MCF 10A (cell line): ENCODE measurements at regions of chr13 and their contacts with region 1.

Region 1: GRCh38 chr13:24802074-24802473 is 38.1 kb downstream of the RNF17 start:
- DNase-seq: peak; percentile 81
- H3K4me3 Mint-ChIP-seq: no peak overlapping the region
- H3K27ac Mint-ChIP-seq: peak overlapping the region; percentile 8
- H3K4me1 Mint-ChIP-seq: peaks cover 6% of the 10 kb centered on the region
- H3K27me3 Mint-ChIP-seq: no peaks in the 10 kb centered on the region
- CTCF ChIP-seq: no peak

Region 2: GRCh38 chr13:24788538-24788937 is 13.5 kb before region 1 on chr13:
- CTCF ChIA-PET with region 1: interaction called, 3 read pairs
- POLR2A ChIA-PET with region 1: interaction called, 11 read pairs
- intact Hi-C with region 1: no loop called
- DNase-seq: peak; percentile 12
- H3K4me3 Mint-ChIP-seq: no peak overlapping the region
- H3K27ac Mint-ChIP-seq: no peak overlapping the region
- H3K4me1 Mint-ChIP-seq: no peaks in the 10 kb centered on the region
- H3K27me3 Mint-ChIP-seq: no peaks in the 10 kb centered on the region
- CTCF ChIP-seq: no peak